ENCODE measurements at regions of chr15 and their contacts with region 1.

Region 1: GRCh38 chr15:31338879-31339557 is 12.4 kb downstream of the KLF13 start:
- DNase-seq: peak; percentile 92

Region 2: DNA sequence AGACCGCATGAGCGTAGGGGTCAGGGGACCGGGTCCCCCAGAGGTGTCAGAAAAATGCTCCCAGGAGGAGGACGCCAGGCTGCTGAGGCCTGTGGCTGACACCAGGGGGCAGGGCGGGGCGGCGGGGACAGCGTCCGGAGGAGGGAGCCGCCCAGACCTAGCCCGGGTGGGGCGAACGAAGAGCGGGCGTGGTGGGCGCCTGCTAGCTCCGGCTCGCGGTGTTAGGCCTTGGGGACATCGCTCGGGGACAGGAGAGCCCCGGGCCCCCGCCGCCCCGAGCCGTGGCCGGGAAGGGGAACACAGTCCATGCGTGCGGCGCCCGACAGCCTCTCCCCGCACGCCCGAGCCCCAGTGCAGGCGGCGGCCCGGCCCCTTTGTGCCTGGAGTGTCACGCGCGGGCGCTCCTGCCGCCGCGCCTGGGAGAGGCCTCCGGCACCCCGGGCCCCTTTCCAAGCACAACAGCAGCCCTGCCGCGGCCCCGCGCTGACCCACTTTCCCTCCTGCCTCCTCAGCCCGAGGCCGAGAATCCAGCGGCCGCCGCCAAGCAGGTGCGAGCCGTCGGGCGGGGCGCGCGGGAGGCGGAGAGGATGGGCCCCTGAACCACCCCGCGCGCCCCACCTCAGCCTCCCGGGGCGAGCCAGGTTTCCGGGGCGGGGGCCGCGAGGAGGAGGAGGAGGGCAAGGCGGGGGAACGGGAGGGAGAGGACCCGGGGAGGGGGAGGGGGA is 123.4 kb before region 1 on chr15:
- intact Hi-C with region 1: loop called in 1 of 2 experiments (anchors 10 kb)
- DNase-seq: peak; percentile 96

Region 3: DNA sequence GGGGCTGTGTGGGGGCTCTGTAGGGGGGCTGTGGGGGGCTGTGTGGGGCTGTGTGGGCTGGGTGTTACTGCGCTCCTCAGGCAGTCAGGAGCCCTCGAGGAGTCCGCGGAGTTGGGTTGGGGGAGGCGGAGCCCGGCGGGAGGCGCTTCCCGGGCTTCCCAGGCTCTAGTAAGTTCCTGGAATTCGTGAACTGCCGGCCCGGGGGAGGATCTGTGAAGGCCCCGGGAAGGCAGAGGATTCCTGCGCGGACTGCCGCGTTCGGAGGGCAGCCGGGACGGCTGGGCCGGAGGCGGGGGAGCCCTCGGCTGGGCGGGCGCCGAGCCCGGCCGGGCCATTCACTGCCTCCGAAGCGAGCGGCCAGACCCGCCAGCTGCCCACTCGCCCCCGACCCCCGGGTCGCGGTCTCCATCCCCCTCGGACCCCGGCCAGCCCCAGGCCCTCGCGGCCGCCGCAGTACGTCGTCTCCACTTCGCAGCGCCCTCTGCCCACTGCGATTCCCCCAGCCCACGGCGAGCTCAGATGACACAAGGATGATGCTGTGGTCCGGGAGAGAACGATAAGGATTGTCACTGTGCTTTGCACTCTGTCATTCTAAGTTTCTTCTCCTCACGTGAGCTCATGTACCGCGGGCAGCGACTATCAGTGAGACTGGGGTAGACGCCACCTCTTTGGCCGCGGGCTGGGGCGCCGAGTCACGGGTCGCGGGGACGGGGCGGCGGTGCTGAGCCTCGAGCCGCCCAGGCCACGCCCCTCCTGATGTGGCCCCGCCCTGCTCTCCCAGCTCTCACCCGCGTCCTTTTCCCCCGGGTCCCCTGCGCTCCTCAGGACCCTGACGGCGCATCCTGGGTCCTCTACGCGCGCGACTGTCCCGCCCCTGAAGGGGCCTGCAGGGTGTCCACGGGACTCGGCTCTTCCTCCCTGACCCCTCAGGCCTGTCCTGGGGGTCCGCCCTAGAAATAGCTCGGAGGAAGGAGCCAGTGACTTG is 53.0 kb after region 1 on chr15:
- intact Hi-C with region 1: no loop called
- DNase-seq: peak; percentile 96

Measured in posterior vena cava (tissue), 2 donors.